Activated CD4-positive, alpha-beta T cell treated with anti-CD3 and anti-CD28 coated beads for 36 hours (primary cell): ENCODE measurements at regions of chr17 and their contacts with region 1.

Region 1: DNA sequence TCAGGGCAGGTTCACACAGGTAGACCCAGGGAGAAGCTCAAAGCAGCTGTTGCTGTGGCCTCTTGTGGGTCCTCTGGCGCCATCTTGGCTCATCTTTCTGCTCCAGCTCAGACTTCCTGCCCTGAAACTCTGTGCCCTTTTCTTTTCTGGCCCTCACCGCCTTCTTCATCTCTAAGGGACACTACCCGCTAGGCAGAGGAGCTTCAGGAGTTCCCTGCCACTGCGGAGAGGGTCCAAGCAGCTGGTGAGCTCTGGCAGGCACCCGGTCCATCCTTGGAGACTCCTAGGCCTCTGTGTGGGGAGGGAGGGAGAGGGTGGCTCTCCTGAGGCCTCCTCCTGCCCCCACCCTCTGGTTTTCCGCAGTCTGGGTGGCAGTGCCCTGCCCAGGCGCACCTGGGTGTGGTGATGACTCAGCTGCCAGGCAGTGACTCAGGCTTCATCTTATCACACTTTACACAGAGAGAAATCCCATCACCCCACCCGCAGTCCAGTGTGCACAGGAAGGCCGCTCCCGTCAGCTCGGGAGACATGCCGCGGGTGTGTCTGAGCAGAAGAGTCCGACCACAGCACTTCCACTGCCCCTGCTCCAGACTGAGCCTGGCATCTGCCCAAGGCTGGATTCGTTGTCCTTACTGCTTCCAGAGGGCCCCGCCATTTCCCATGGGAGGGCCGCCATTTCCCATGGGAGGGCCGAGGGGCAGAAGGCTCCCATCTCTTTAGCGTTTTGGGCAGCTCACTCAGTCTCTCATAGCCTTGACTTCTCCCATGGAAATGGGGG is 7.3 kb downstream of the NT5C start:
- DNase-seq: peak; percentile 88
- ATAC-seq: peak; percentile 97
- H3K4me3 Mint-ChIP-seq: peak overlapping the region; percentile 44
- H3K27ac Mint-ChIP-seq: peak overlapping the region; percentile 94
- H3K4me1 Mint-ChIP-seq: peaks cover 27% of the 10 kb centered on the region
- H3K27me3 Mint-ChIP-seq: no peaks in the 10 kb centered on the region

Region 2: GRCh38 chr17:75059369-75060345 is 64.6 kb before region 1 on chr17:
- CTCF ChIA-PET with region 1: no interaction called
- POLR2A ChIA-PET with region 1: no interaction called
- intact Hi-C with region 1: no loop called
- DNase-seq: no peak
- ATAC-seq: peak; percentile 39
- H3K4me3 Mint-ChIP-seq: no peak overlapping the region
- H3K27ac Mint-ChIP-seq: no peak overlapping the region
- H3K4me1 Mint-ChIP-seq: peaks cover 18% of the 10 kb centered on the region
- H3K27me3 Mint-ChIP-seq: no peaks in the 10 kb centered on the region

Region 3: DNA sequence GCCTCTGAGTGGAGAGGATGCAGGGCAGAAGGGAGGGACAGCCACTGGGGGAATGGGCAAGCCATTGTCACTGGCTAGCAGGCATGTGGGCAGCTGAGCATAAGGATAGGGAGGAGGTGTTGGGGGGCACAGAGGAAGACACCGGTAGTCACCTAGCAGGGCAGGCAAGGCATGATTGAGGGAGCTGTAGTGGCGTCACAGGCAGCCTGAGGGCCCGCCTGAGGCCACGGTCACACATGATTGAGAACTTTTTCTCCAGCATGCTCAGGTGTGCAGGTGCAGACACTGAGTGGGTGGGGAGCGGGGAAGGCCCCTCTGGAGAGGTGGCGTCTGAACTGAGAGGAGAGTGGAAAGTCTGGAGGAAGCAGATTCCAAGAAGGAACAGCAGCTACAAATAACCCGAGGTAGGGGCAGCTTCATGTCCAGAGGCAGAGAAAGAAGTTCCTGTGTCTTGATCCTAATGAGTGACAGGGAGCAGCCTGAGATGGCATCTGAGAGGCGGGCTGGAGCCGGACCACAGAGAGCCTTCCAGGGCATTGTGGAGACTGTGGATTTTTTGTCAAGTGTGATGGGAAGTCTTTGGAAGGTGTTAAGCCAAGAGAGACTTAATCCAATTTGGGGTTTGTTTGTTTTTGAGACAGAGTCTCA is 25.3 kb before region 1 on chr17:
- CTCF ChIA-PET with region 1: no interaction called
- POLR2A ChIA-PET with region 1: no interaction called
- intact Hi-C with region 1: no loop called
- DNase-seq: no peak
- ATAC-seq: no peak
- H3K4me3 Mint-ChIP-seq: no peak overlapping the region
- H3K27ac Mint-ChIP-seq: no peak overlapping the region
- H3K4me1 Mint-ChIP-seq: peaks cover 3% of the 10 kb centered on the region
- H3K27me3 Mint-ChIP-seq: no peaks in the 10 kb centered on the region

Region 4: DNA sequence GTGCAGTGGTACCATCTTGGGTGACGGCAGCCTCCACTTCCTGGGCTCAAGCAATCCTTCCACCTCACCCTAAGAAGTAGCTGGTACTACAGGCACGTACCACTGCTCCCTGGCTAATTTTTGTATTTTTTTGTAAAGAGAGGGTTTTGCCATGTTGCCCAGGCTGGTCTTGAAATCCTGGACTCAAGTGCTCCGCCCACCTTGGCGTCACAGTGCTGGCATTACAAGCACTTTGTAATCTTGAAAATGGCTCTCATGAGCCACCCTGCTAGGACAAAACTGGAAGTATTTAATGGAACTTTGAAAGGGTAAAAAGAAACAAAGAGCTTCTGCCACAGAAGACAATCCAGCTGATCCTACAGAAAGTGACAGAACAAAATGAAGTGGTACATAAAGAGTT is 49.3 kb after region 1 on chr17:
- CTCF ChIA-PET with region 1: interaction called, 19 read pairs
- POLR2A ChIA-PET with region 1: interaction called, 7 read pairs
- intact Hi-C with region 1: no loop called
- DNase-seq: no peak
- ATAC-seq: no peak
- H3K4me3 Mint-ChIP-seq: no peak overlapping the region
- H3K27ac Mint-ChIP-seq: no peak overlapping the region
- H3K4me1 Mint-ChIP-seq: peaks cover 14% of the 10 kb centered on the region
- H3K27me3 Mint-ChIP-seq: no peaks in the 10 kb centered on the region

Region 5: GRCh38 chr17:75504347-75504964 is 380.2 kb after region 1 on chr17:
- CTCF ChIA-PET with region 1: no interaction called
- POLR2A ChIA-PET with region 1: no interaction called
- intact Hi-C with region 1: no loop called
- DNase-seq: peak; percentile 63
- ATAC-seq: peak; percentile 68
- H3K4me3 Mint-ChIP-seq: no peak overlapping the region
- H3K27ac Mint-ChIP-seq: no peak overlapping the region
- H3K4me1 Mint-ChIP-seq: no peaks in the 10 kb centered on the region
- H3K27me3 Mint-ChIP-seq: no peaks in the 10 kb centered on the region